Dendritic cell treated with granulocyte-macrophage colony-stimulating factor and Interleukin-4, amounts not matched to agents 40 ng/mL and 50 ng/mL, for 4 days (primary cell): ENCODE measurements at regions of chr4 and their contacts with region 1.

Region 1: DNA sequence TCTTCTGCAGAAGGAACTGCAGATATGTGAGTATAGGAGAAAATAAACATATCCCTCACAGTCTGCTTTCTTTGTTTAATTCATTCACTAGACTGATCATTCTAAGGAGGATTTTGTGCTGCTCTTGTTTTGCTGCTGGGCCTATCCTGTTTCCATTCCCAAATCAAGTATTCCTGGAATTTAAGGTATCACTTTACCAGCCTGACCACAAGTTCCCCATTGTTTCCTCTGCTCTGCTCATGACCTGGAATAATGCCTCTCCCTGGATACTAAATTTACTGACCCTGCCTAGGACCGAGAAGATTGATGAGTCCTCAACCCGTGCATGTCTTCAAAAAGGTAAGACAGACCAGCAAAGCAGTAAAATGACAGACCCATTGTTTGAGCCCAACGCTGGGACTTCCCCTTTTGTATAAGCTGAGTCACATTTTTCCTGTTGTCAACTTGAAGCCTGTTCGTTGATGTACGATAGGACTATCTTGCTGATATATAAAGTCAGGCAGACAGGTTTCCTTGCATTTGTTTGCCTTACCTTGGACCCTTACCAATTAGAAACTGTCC is 85.5 kb upstream of the TET2 start:
- H3K4me3 Mint-ChIP-seq: peak overlapping the region; percentile 55
- H3K27ac Mint-ChIP-seq: peak overlapping the region; percentile 96
- H3K4me1 Mint-ChIP-seq: peaks cover 48% of the 10 kb centered on the region
- H3K27me3 Mint-ChIP-seq: no peaks in the 10 kb centered on the region

Region 2: DNA sequence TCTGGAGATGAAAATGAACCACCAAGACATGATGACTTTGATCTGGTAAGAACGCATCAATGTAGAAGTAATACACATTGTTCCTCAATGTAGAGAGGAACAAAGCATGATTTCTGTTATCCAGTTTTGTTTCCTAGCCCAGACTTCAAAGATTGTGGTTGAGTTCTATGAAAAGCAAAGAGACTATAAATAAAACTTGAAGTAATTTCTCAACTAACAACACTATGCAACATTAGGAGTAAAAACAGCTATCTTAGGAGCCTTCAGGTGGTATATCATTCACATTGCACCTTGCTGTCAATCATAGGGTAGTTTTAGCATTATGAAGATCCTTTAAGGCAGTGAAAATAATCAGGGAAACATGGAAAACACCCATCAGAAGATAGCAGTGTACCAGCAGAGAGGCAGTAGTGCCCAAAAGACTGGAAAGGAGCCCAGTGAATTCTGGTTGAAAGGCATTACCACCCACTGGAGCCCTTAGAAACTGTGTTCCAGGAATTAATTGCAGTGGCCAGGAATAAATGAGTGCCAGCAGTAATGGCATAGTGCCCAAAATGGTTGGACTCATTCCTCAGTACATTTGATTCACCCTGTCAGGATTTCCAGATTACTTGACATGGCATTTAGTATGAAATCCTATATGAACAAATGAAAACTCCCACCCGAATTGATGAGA is 265.8 kb before region 1 on chr4:
- intact Hi-C with region 1: no loop called
- H3K4me3 Mint-ChIP-seq: no peak overlapping the region
- H3K27ac Mint-ChIP-seq: no peak overlapping the region
- H3K4me1 Mint-ChIP-seq: no peaks in the 10 kb centered on the region
- H3K27me3 Mint-ChIP-seq: no peaks in the 10 kb centered on the region

Region 3: DNA sequence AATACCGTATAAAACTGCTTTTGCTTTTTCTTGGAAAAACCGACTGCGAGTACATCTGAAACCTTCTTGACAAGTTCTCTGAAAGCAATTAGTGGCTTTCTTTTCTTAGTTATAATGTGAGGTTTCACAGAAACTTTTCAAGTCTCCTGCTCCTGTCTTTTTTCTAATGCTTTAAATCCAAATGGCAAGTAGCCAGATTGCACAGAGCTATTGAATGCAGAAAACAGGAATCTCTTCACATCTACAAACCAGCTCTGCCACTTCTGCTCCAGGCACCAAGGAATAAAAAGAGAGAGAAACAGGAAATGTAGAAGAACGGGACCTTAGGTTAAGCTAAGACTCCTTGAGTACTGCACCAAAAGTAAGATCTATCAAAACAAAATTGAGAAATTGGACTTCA is 181.8 kb before region 1 on chr4:
- intact Hi-C with region 1: loop called (anchors 10 kb)
- H3K4me3 Mint-ChIP-seq: peak overlapping the region; percentile 10
- H3K27ac Mint-ChIP-seq: no peak overlapping the region
- H3K4me1 Mint-ChIP-seq: peaks cover 18% of the 10 kb centered on the region
- H3K27me3 Mint-ChIP-seq: peaks cover 6% of the 10 kb centered on the region

Region 4: DNA sequence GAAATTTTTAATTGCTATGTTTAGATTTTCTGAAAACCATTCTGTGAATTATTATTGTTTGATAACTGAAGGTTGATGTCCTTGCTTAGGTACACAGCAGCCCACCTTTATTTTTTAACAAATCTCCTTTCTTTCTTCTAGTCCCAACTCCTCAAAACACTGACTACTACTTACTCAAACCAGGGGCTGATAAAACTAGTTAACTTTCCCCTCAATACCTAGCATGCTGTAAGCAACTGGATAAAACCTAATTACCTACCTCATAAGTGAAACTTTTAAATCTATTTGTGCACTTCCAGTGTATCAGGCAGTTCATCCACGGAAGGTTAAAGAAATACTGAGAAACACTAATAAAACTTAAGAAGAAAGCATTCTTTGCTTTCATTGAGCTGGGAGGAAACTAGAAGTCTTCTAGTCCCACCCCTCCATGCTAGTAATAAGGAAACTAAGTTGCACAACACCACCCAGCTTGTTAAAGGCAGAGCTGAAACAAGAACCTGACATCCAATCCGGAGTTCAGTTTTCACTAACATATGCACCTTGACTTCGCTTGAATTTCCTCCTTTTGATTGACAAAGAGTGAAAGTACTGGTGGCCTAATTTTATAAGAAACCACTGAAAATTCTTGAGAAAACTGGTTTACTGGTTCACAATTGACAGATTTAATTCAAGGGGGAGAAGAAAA is 94.7 kb before region 1 on chr4:
- intact Hi-C with region 1: loop called (anchors 5 kb)
- H3K4me3 Mint-ChIP-seq: peak overlapping the region; percentile 66
- H3K27ac Mint-ChIP-seq: peak overlapping the region; percentile 91
- H3K4me1 Mint-ChIP-seq: peaks cover 43% of the 10 kb centered on the region
- H3K27me3 Mint-ChIP-seq: no peaks in the 10 kb centered on the region

Region 5: GRCh38 chr4:105014635-105015034 is 46.6 kb before region 1 on chr4:
- intact Hi-C with region 1: loop called (anchors 5 kb)
- H3K4me3 Mint-ChIP-seq: peak overlapping the region; percentile 6
- H3K27ac Mint-ChIP-seq: peak overlapping the region; percentile 85
- H3K4me1 Mint-ChIP-seq: peaks cover 18% of the 10 kb centered on the region
- H3K27me3 Mint-ChIP-seq: no peaks in the 10 kb centered on the region

Region 6: DNA sequence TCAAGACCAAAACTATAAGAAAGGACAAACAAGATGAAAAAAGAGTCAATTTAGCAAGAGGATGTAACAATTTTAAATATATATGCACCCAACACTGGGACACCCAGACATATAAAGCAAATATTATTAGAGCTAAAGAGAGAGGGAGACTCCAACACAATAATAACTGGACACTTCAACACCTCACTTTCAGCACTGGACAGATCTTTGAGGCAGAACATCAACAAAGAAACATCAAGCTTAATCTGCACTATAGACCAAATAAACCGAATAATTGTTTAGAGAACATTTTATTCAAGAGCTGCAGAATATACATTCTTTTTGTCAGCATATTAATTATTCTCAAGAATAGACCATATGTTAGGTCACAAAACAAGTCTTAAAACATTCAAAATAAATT is 24.2 kb before region 1 on chr4:
- intact Hi-C with region 1: no loop called
- H3K4me3 Mint-ChIP-seq: no peak overlapping the region
- H3K27ac Mint-ChIP-seq: no peak overlapping the region
- H3K4me1 Mint-ChIP-seq: no peaks in the 10 kb centered on the region
- H3K27me3 Mint-ChIP-seq: no peaks in the 10 kb centered on the region

Region 7: GRCh38 chr4:105106426-105106825 is 45.2 kb after region 1 on chr4:
- intact Hi-C with region 1: loop called (anchors 2 kb)
- H3K4me3 Mint-ChIP-seq: no peak overlapping the region
- H3K27ac Mint-ChIP-seq: peak overlapping the region; percentile 89
- H3K4me1 Mint-ChIP-seq: peaks cover 23% of the 10 kb centered on the region
- H3K27me3 Mint-ChIP-seq: no peaks in the 10 kb centered on the region

Region 8: DNA sequence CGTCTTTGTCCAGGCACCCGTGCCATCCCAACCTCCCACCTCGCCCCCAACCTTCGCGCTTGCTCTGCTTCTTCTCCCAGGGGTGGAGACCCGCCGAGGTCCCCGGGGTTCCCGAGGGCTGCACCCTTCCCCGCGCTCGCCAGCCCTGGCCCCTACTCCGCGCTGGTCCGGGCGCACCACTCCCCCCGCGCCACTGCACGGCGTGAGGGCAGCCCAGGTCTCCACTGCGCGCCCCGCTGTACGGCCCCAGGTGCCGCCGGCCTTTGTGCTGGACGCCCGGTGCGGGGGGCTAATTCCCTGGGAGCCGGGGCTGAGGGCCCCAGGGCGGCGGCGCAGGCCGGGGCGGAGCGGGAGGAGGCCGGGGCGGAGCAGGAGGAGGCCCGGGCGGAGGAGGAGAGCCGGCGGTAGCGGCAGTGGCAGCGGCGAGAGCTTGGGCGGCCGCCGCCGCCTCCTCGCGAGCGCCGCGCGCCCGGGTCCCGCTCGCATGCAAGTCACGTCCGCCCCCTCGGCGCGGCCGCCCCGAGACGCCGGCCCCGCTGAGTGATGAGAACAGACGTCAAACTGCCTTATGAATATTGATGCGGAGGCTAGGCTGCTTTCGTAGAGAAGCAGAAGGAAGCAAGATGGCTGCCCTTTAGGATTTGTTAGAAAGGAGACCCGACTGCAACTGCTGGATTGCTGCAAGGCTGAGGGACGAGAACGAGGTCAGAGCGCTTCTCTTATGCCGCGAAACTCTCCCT is 85.2 kb after region 1 on chr4 and contains the start of gene TET2:
- intact Hi-C with region 1: loop called (anchors 1 kb)
- H3K4me3 Mint-ChIP-seq: peak within 1 kb of the TSS; percentile 89
- H3K27ac Mint-ChIP-seq: peak within 1 kb of the TSS; percentile 100
- H3K4me1 Mint-ChIP-seq: peaks cover 54% of the 10 kb centered on the region
- H3K27me3 Mint-ChIP-seq: no peaks in the 10 kb centered on the region

Region 9: DNA sequence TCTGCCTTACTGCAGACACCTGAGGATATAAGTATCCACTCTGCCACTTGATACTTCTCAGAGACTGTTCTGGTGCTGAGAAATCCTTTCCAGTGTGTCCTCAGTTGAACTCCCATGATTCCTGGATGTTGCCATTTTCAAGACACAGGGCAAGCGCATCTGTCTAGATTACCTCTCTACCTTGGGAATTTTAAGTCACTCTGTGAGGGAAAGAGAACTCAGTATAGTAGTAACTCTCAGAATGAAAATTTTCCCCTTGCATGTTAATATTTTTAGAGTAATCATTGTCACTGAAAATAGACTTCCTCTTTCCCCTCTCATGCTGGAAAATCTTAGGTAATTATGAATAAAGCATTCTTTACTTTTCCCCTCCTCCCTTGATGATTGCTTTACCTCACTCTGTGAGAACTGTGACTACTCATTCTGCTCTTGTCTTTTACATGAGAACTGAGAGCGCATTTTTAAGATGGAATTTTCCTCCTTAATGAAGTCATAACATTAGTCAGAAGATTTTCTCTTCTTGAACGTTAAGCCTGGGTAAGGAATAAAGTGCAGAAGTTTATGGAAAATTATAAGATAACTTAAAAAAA is 130.5 kb after region 1 on chr4:
- intact Hi-C with region 1: loop called (anchors 5 kb)
- H3K4me3 Mint-ChIP-seq: no peak overlapping the region
- H3K27ac Mint-ChIP-seq: peak overlapping the region; percentile 63
- H3K4me1 Mint-ChIP-seq: peaks cover 70% of the 10 kb centered on the region
- H3K27me3 Mint-ChIP-seq: no peaks in the 10 kb centered on the region